ENCODE measurements at regions of chr14 and their contacts with region 1.

Region 1: GRCh38 chr14:74881431-74882361 is at the start of gene DLST:
- DNase-seq: peak; percentile 87
- H3K4me3 ChIP-seq: peak within 1 kb of the TSS; percentile 49 to 95 (median 93)
- H3K27ac ChIP-seq: peak within 1 kb of the TSS; percentile 74
- H3K4me1 ChIP-seq: peaks cover 24% of the 10 kb centered on the region
- H3K27me3 ChIP-seq: no peaks in the 10 kb centered on the region
- CTCF ChIP-seq: no peak
- POLR2A ChIP-seq: peak; percentile 96
- total RNA-seq, gene DLST: 105 and 110 TPM in 2 replicates

Region 2: DNA sequence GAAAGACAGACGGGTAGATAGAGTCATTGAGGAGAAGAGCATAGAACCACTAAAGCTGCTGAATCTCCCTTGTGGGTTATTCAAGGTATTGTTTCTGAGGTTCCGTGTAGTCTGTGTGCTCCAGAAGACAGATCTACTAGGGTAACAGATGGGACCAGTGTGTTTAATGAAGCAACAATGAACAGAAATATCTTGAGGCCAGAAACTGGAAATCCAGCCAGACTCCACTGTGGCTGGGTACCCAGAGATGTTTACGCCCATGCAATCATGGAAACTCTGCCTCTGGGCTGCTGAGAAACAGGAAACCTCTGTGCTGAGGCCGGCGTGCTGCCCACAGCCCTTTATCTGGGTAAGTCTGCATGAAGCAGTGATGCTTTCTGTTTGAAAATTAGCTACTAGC is 14.0 kb before region 1 on chr14:
- CTCF ChIA-PET with region 1: interaction called, 245 read pairs
- POLR2A ChIA-PET with region 1: no interaction called
- dilution Hi-C with region 1: no loop called
- intact Hi-C with region 1: no loop called
- DNase-seq: peak; percentile 71
- H3K4me3 ChIP-seq: no peak overlapping the region
- H3K27ac ChIP-seq: no peak overlapping the region
- H3K4me1 ChIP-seq: no peaks in the 10 kb centered on the region
- H3K27me3 ChIP-seq: peaks cover 5 to 9% of the 10 kb centered on the region in 2 experiments
- CTCF ChIP-seq: no peak
- POLR2A ChIP-seq: no peak

Region 3: DNA sequence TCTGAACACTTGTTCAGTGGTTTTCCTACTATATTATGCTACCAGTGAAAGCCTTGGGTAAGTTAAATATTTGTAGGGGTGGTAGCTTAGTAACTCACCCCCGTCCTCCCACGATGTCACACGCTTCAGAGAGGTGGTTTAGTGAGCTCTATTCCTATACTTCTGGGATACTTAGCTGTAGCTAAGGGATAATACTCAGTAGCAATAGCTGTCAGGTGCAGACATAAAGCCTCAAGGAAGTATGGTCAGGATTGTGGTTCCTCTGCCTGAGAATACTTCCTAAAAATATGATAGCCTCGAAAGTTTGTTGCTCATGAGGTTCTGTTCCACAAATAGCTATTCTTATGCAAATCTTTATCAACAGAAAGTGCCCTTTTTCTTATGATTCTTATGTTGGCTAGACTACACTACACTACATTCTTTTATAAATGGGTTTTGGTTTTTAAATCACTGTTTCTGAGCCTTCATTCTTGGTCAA is 12.0 kb after region 1 on chr14:
- CTCF ChIA-PET with region 1: interaction called, 12 read pairs
- POLR2A ChIA-PET with region 1: interaction called, 4 read pairs
- dilution Hi-C with region 1: no loop called
- intact Hi-C with region 1: no loop called
- DNase-seq: no peak
- H3K4me3 ChIP-seq: no peak overlapping the region
- H3K27ac ChIP-seq: no peak overlapping the region
- H3K4me1 ChIP-seq: no peaks in the 10 kb centered on the region
- H3K27me3 ChIP-seq: no peaks in the 10 kb centered on the region
- CTCF ChIP-seq: no peak
- POLR2A ChIP-seq: no peak

Region 4: DNA sequence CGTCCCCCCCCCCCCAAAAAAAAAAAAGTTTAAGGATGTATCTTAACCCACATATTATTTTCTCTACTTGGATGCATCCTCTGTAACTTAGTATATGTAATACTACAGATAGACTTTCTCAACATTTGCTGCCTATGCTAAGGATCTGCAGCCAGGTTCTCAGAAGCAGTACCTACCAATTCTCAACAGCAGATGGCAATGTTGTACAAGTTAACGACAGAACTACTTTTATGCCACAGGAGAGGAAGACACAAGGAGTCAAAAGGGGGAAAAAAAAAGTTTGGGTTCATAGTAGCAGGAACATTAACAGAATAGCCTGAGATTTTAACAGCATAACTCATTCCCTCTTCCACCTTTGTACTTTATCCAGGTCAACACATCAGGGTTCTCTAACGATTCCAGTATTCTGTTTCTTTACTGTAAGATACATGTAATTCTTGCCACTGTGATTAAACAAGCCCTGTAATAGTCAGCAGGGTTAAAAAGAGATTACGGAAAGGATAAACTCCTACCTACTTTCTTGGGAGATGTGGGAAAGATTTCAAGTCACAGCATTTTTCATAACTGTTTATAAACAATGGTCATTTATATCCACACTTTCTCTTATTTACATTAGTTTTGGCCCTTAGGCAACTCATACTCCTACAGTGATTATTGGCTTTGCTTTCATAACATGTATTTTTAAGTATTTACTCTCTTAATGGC is 250.8 kb after region 1 on chr14:
- CTCF ChIA-PET with region 1: no interaction called
- POLR2A ChIA-PET with region 1: no interaction called
- dilution Hi-C with region 1: no loop called
- intact Hi-C with region 1: no loop called
- DNase-seq: peak; percentile 81
- H3K4me3 ChIP-seq: no peak overlapping the region
- H3K27ac ChIP-seq: no peak overlapping the region
- H3K4me1 ChIP-seq: peaks cover 10% of the 10 kb centered on the region
- H3K27me3 ChIP-seq: no peaks in the 10 kb centered on the region
- CTCF ChIP-seq: peak; percentile 38 to 55
- POLR2A ChIP-seq: no peak

Measured in endothelial cell of umbilical vein (primary cell).